ENCODE measurements at regions of chr11 and their contacts with region 1.

Region 1: GRCh38 chr11:20609727-20610707 is 10.6 kb downstream of the SLC6A5 start:
- DNase-seq: peak; percentile 61 to 87 (median 74)
- ATAC-seq: peak; percentile 79 to 98 (median 94)
- H3K4me3 ChIP-seq: peak overlapping the region in 1 of 12 donors; percentile 17
- H3K27ac ChIP-seq: no peak overlapping the region
- H3K4me1 ChIP-seq: peaks cover 0 to 9% (median 0%) of the 10 kb centered on the region in 12 donors
- H3K27me3 ChIP-seq: peaks cover 6 to 65% (median 25%) of the 10 kb centered on the region in 9 donors
- CTCF ChIP-seq: peak; percentile 70 to 95 (median 92)
- POLR2A ChIP-seq: no peak

Region 2: DNA sequence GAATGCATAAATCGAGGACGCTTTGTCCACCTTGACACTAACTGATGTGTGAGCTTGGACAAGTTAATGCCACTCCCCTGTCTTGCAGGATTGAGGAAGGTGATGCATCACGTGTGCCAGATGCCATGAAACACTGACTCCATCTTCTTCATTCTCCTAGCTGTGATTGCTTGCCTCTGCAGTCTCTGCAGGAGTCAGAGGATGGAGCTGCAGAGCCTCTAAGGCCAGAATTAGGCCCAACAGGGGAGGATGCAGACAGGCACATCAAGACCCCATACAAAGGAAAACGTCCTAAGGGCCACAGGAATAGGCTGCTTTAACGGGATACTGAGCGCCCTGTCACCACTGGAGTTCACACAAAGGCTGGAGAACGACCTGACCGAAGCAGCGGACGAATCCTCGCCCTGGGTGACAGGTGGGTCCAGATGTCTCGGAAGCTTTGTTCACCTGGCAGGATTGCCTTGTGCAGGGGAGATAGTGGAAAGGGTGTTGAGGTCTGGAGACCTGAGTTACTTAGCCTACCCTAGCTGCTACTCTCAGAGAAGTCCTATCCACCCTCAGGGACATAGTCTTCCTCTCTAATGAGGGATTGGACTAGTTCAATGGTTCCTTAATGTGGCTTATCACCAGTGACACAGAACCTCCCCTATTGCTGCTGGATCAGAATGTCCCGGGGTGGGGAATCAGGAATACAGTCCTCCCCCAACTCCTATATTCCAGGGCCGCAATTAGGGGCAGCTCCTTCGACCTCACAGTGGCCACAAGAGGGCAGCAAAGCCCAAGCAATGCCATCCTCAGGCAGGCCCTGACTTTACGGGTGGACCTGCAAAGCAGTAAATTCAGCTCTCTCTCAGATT is 482.1 kb before region 1 on chr11:
- intact Hi-C with region 1: loop called in 3 of 10 experiments (anchors 5 kb)
- DNase-seq: peak; percentile 71 to 82 (median 76)
- ATAC-seq: peak; percentile 63 to 86 (median 80)
- H3K4me3 ChIP-seq: no peak overlapping the region
- H3K27ac ChIP-seq: no peak overlapping the region
- H3K4me1 ChIP-seq: peaks cover 0 to 11% (median 4%) of the 10 kb centered on the region in 12 donors
- H3K27me3 ChIP-seq: peaks cover 0 to 13% (median 0%) of the 10 kb centered on the region in 9 donors
- CTCF ChIP-seq: peak; percentile 78 to 87 (median 83)
- POLR2A ChIP-seq: no peak

Region 3: GRCh38 chr11:20387241-20388095 is 222.5 kb before region 1 on chr11 and contains the start of gene PRMT3:
- intact Hi-C with region 1: loop called in 4 of 10 experiments (anchors 1 to 2 kb)
- DNase-seq: peak; percentile 96 to 98 (median 97)
- ATAC-seq: peak; percentile 94 to 98 (median 98)
- H3K4me3 ChIP-seq: peak within 1 kb of the TSS; percentile 70 to 93 (median 84)
- H3K27ac ChIP-seq: peak within 1 kb of the TSS; percentile 80 to 97 (median 92)
- H3K4me1 ChIP-seq: peaks cover 0 to 22% (median 13%) of the 10 kb centered on the region in 12 donors
- H3K27me3 ChIP-seq: no peaks in the 10 kb centered on the region
- CTCF ChIP-seq: peak; percentile 77 to 99 (median 94)
- POLR2A ChIP-seq: peak in 1 of 2 donors; percentile 79
- total RNA-seq, gene PRMT3: 9.9 to 15.0 (median 10.5) TPM

Region 4: GRCh38 chr11:20397281-20397680 is 212.7 kb before region 1 on chr11:
- intact Hi-C with region 1: loop called in 6 of 10 experiments (anchors 2 to 5 kb)
- DNase-seq: no peak
- ATAC-seq: no peak
- H3K4me3 ChIP-seq: no peak overlapping the region
- H3K27ac ChIP-seq: no peak overlapping the region
- H3K4me1 ChIP-seq: no peaks in the 10 kb centered on the region
- H3K27me3 ChIP-seq: no peaks in the 10 kb centered on the region
- CTCF ChIP-seq: peak in 11 of 12 donors; percentile 9 to 59 (median 48)
- POLR2A ChIP-seq: no peak

Region 5: DNA sequence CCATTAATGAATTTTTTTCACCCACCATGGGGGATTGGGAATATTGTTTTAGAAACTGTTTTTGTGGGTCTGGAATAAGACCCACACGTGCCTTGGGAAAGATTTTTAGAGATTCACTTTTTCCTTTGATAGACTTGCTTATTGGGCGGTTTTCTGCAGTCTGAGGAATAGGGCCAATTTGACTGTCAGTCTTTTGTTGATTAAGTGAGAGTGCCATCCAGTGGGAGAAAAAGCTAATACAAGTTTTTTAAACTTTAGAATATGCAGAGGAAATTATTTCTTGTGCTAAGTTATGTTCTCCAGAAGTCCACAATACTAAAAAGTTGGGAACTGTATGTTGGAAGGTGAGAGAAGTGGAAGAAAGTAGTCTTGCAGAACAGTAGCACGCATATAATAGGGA is 166.4 kb before region 1 on chr11:
- intact Hi-C with region 1: loop called in 1 of 10 experiments (anchors 10 kb)
- DNase-seq: no peak
- ATAC-seq: no peak
- H3K4me3 ChIP-seq: no peak overlapping the region
- H3K27ac ChIP-seq: no peak overlapping the region
- H3K4me1 ChIP-seq: no peaks in the 10 kb centered on the region
- H3K27me3 ChIP-seq: no peaks in the 10 kb centered on the region
- CTCF ChIP-seq: peak in 7 of 12 donors; percentile 3 to 34 (median 22)
- POLR2A ChIP-seq: no peak

Region 6: DNA sequence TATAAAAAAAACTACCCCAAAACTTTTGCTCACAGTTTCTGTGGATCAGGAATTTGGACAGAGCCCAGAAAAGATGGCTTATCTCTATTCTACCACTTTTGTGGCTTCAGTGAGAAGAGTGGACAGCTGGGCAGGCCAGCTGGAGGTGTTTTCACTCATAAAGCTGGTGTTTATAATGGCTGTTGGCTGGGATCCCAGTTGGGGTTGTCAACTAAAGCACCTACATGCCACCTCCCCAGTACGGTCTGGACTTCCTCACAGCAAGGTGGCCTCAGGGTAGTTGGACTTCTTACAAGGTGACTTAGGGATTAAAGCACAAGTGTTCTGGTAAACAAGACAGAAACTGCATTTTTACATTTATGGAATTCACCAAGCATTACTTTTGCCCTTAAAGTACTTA is 230.3 kb after region 1 on chr11:
- intact Hi-C with region 1: no loop called
- DNase-seq: no peak
- ATAC-seq: no peak
- H3K4me3 ChIP-seq: no peak overlapping the region
- H3K27ac ChIP-seq: no peak overlapping the region
- H3K4me1 ChIP-seq: no peaks in the 10 kb centered on the region
- H3K27me3 ChIP-seq: no peaks in the 10 kb centered on the region
- CTCF ChIP-seq: no peak
- POLR2A ChIP-seq: no peak